ENCODE measurements at regions of chr1 and their contacts with region 1.

Region 1: DNA sequence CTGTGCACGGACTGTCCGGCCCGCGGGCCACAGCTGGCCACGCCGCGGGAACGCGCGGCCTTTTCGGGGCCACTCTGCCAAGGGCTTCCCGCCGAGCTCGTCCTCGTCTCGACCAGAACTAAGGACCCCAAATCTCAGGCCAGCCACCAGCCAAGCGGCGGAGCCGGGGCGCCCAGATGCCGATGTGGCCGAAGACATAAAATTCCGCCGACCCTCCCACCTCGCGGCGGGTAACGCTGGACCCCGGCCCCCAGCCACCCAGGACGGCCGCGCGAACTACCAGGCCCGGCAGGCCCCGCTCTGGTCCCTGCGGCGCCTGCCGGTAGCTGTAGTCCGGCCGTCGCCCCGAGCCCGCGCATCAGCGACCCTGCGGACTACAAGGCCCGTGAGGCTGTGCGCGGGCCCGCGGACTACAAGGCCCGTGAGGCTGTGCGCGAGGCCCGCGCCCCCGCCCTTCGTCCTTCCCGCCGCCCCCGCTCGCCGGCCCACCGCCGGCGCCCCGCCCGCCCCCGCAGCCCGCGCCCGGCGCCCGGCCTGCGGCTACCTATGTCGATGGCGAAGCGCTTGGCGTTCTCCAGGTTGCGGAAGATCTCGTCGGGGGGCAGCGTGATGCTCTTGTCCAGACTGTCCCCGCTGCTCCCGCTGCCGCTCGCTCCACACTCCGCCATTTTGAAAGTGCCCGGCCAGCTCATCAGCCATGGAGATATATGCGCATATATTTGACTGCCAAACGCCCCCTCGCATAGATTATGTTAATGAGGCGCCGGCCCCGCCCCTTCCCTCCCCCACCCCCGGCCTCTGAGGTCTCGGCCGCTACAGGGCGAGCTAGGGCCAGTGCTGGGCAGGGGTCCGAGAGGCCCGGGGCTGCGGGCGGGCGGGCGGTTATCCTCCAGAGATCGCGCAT is at the start of gene PANK4:
- DNase-seq: peak; percentile 80 to 90 (median 89)
- ATAC-seq: peak; percentile 95
- H3K4me3 ChIP-seq: peak within 1 kb of the TSS; percentile 65
- H3K4me3 Mint-ChIP-seq: peak within 1 kb of the TSS; percentile 88 to 100 (median 94)
- H3K27ac ChIP-seq: peak within 1 kb of the TSS; percentile 81
- H3K27ac Mint-ChIP-seq: peak within 1 kb of the TSS; percentile 87 to 98 (median 96)
- H3K4me1 ChIP-seq: peaks cover 44 to 47% of the 10 kb centered on the region in 2 donors
- H3K4me1 Mint-ChIP-seq: peaks cover 32 to 57% (median 44%) of the 10 kb centered on the region in 7 donors
- H3K27me3 ChIP-seq: peaks cover 4 to 7% of the 10 kb centered on the region in 2 donors
- H3K27me3 Mint-ChIP-seq: peaks cover 0 to 27% (median 0%) of the 10 kb centered on the region in 5 donors
- total RNA-seq, gene PANK4: 55.8 to 91.2 (median 72.6) TPM

Region 2: GRCh38 chr1:2133039-2133878 is 392.9 kb before region 1 on chr1:
- CTCF ChIA-PET with region 1: no interaction called
- POLR2A ChIA-PET with region 1: interaction called, 3 read pairs
- intact Hi-C with region 1: loop called in 1 of 2 experiments (anchors 1 kb)
- DNase-seq: peak; percentile 93 to 97 (median 96)
- ATAC-seq: peak; percentile 94
- H3K4me3 ChIP-seq: peak overlapping the region; percentile 66
- H3K4me3 Mint-ChIP-seq: peak overlapping the region; percentile 73 to 88 (median 83)
- H3K27ac ChIP-seq: peak overlapping the region; percentile 80
- H3K27ac Mint-ChIP-seq: peak overlapping the region; percentile 54 to 96 (median 93)
- H3K4me1 ChIP-seq: peaks cover 10% of the 10 kb centered on the region in 2 donors
- H3K4me1 Mint-ChIP-seq: peaks cover 5 to 32% (median 17%) of the 10 kb centered on the region in 7 donors
- H3K27me3 ChIP-seq: no peaks in the 10 kb centered on the region
- H3K27me3 Mint-ChIP-seq: no peaks in the 10 kb centered on the region

Region 3: GRCh38 chr1:2391041-2391930 is 134.9 kb before region 1 on chr1 and contains the starts of genes MORN1 and RER1:
- CTCF ChIA-PET with region 1: interaction called, 3 read pairs
- POLR2A ChIA-PET with region 1: interaction called, 4 read pairs
- intact Hi-C with region 1: loop called (anchors 1 kb)
- DNase-seq: peak; percentile 96 to 100 (median 99)
- ATAC-seq: peak; percentile 98
- H3K4me3 ChIP-seq: peak within 1 kb of the TSS; percentile 77
- H3K4me3 Mint-ChIP-seq: peak within 1 kb of the TSS; percentile 80 to 93 (median 90)
- H3K27ac ChIP-seq: peak within 1 kb of the TSS; percentile 82
- H3K27ac Mint-ChIP-seq: peak within 1 kb of the TSS; percentile 63 to 96 (median 88)
- H3K4me1 ChIP-seq: peaks cover 23 to 33% of the 10 kb centered on the region in 2 donors
- H3K4me1 Mint-ChIP-seq: peaks cover 23 to 41% (median 31%) of the 10 kb centered on the region in 7 donors
- H3K27me3 ChIP-seq: no peaks in the 10 kb centered on the region
- H3K27me3 Mint-ChIP-seq: no peaks in the 10 kb centered on the region
- total RNA-seq, gene MORN1: 8.5 to 16.4 (median 11.2) TPM
- total RNA-seq, gene RER1: 71.0 to 150 (median 136) TPM

Region 4: GRCh38 chr1:2425892-2426291 is 100.3 kb before region 1 on chr1:
- CTCF ChIA-PET with region 1: no interaction called
- POLR2A ChIA-PET with region 1: no interaction called
- intact Hi-C with region 1: no loop called
- DNase-seq: no peak
- ATAC-seq: no peak
- H3K4me3 ChIP-seq: no peak overlapping the region
- H3K4me3 Mint-ChIP-seq: no peak overlapping the region
- H3K27ac ChIP-seq: no peak overlapping the region
- H3K27ac Mint-ChIP-seq: no peak overlapping the region
- H3K4me1 ChIP-seq: no peaks in the 10 kb centered on the region
- H3K4me1 Mint-ChIP-seq: peaks cover 0 to 3% (median 0%) of the 10 kb centered on the region in 7 donors
- H3K27me3 ChIP-seq: no peaks in the 10 kb centered on the region
- H3K27me3 Mint-ChIP-seq: no peaks in the 10 kb centered on the region

Region 5: GRCh38 chr1:2556277-2556677 is 30.1 kb after region 1 on chr1 and contains the start of gene TNFRSF14:
- CTCF ChIA-PET with region 1: interaction called, 4 read pairs
- POLR2A ChIA-PET with region 1: interaction called, 16 read pairs
- intact Hi-C with region 1: no loop called
- DNase-seq: peak; percentile 47 to 82 (median 75)
- ATAC-seq: peak; percentile 76
- H3K4me3 ChIP-seq: peak within 1 kb of the TSS; percentile 83
- H3K4me3 Mint-ChIP-seq: peak within 1 kb of the TSS; percentile 89 to 100 (median 99)
- H3K27ac ChIP-seq: peak within 1 kb of the TSS; percentile 93
- H3K27ac Mint-ChIP-seq: peak within 1 kb of the TSS; percentile 89 to 99 (median 99)
- H3K4me1 ChIP-seq: peaks cover 25 to 28% of the 10 kb centered on the region in 2 donors
- H3K4me1 Mint-ChIP-seq: peaks cover 12 to 42% (median 36%) of the 10 kb centered on the region in 7 donors
- H3K27me3 ChIP-seq: no peaks in the 10 kb centered on the region
- H3K27me3 Mint-ChIP-seq: no peaks in the 10 kb centered on the region
- total RNA-seq, gene TNFRSF14: 182 to 253 (median 204) TPM

Region 6: DNA sequence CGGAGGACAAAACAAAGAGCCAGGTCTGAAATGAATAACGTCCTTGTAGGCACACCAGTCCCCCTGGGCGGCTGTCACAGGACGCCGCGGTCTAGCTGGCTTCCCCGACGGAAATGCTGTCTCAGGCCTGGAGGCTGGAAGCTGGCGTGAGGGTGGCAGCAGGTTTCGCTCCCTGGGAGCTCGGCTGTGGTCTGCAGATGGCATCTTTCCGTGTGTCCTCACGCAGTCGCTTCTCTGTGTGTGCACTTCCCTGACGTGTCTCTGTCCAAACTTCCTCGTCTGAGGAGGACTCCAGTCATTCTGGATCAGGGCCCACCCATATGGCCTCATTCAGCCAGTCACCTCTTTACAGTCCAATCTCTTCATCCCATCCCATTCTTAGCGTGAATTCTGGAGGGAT is 44.2 kb after region 1 on chr1:
- CTCF ChIA-PET with region 1: no interaction called
- POLR2A ChIA-PET with region 1: no interaction called
- intact Hi-C with region 1: no loop called
- DNase-seq: no peak
- ATAC-seq: peak; percentile 18
- H3K4me3 ChIP-seq: no peak overlapping the region
- H3K4me3 Mint-ChIP-seq: no peak overlapping the region
- H3K27ac ChIP-seq: no peak overlapping the region
- H3K27ac Mint-ChIP-seq: peak overlapping the region in 1 of 9 donors; percentile 26
- H3K4me1 ChIP-seq: no peaks in the 10 kb centered on the region
- H3K4me1 Mint-ChIP-seq: peaks cover 0 to 19% (median 9%) of the 10 kb centered on the region in 7 donors
- H3K27me3 ChIP-seq: no peaks in the 10 kb centered on the region
- H3K27me3 Mint-ChIP-seq: no peaks in the 10 kb centered on the region

Region 7: GRCh38 chr1:2642560-2643413 is 116.6 kb after region 1 on chr1:
- CTCF ChIA-PET with region 1: no interaction called
- POLR2A ChIA-PET with region 1: no interaction called
- intact Hi-C with region 1: loop called in 1 of 2 experiments (anchors 1 kb)
- DNase-seq: peak; percentile 92 to 97 (median 96)
- ATAC-seq: peak; percentile 89
- H3K4me3 ChIP-seq: peak overlapping the region; percentile 87
- H3K4me3 Mint-ChIP-seq: peak overlapping the region; percentile 85 to 96 (median 88)
- H3K27ac ChIP-seq: peak overlapping the region; percentile 97
- H3K27ac Mint-ChIP-seq: peak overlapping the region in 8 of 9 donors; percentile 76 to 93 (median 86)
- H3K4me1 ChIP-seq: peaks cover 9% of the 10 kb centered on the region in 2 donors
- H3K4me1 Mint-ChIP-seq: peaks cover 6 to 19% (median 15%) of the 10 kb centered on the region in 7 donors
- H3K27me3 ChIP-seq: no peaks in the 10 kb centered on the region
- H3K27me3 Mint-ChIP-seq: peaks cover 0 to 3% (median 0%) of the 10 kb centered on the region in 5 donors

Region 8: GRCh38 chr1:2946291-2946690 is 420.1 kb after region 1 on chr1:
- CTCF ChIA-PET with region 1: no interaction called
- POLR2A ChIA-PET with region 1: no interaction called
- intact Hi-C with region 1: no loop called
- DNase-seq: no peak
- ATAC-seq: no peak
- H3K4me3 ChIP-seq: no peak overlapping the region
- H3K4me3 Mint-ChIP-seq: no peak overlapping the region
- H3K27ac ChIP-seq: no peak overlapping the region
- H3K27ac Mint-ChIP-seq: no peak overlapping the region
- H3K4me1 ChIP-seq: no peaks in the 10 kb centered on the region
- H3K4me1 Mint-ChIP-seq: no peaks in the 10 kb centered on the region
- H3K27me3 ChIP-seq: no peaks in the 10 kb centered on the region
- H3K27me3 Mint-ChIP-seq: peaks cover 0 to 25% (median 9%) of the 10 kb centered on the region in 5 donors

Region 9: DNA sequence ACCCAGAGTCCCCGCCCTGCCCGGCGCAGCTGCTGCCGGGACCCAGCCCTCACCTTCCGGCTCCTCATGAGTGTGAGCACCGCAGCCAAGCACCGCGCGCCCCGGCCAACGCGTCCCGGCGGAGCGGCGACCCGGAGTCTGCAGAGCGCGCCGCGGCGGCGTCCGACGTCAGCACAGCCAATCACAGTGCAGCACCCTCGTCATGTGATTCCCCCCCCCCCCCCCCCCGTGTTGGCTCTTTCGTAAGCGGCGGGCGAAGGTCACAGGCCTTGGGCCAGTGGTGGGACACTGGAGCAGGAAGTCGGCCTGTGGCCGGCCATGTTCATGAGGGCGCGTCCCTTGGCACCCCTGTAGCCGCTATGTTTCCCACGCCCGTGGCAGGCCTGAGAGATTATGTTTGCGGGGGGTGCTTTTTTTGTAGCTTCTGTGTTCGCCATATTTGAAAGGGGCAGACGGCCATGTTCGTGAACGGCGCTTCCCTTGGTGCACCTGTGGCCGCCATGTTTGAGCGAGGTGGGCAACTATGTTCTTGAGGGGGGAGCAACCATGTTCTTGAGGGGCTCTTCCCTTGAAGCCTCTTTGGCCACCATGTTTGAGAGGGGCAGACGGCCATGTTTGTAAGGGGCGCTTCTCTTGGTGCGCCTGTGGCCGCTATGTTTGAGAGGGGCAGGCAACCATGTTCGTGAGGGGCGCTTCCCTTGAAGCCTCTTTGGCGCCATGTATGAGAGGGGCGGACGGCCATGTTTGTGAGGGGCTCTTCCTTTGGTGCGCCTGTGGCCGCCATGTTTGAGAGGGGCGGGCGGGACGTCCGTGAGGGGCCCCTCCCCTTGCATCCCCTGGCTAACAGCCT is 1374.2 kb after region 1 on chr1 and contains the start of gene C1orf174:
- CTCF ChIA-PET with region 1: no interaction called
- POLR2A ChIA-PET with region 1: no interaction called
- intact Hi-C with region 1: loop called in 1 of 2 experiments (anchors 2 kb)
- DNase-seq: peak; percentile 78 to 99 (median 96)
- ATAC-seq: peak; percentile 88
- H3K4me3 ChIP-seq: peak within 1 kb of the TSS; percentile 79
- H3K4me3 Mint-ChIP-seq: peak within 1 kb of the TSS; percentile 90 to 96 (median 94)
- H3K27ac ChIP-seq: peak within 1 kb of the TSS; percentile 94
- H3K27ac Mint-ChIP-seq: peak within 1 kb of the TSS; percentile 92 to 99 (median 96)
- H3K4me1 ChIP-seq: peaks cover 6 to 39% of the 10 kb centered on the region in 2 donors
- H3K4me1 Mint-ChIP-seq: peaks cover 23 to 71% (median 53%) of the 10 kb centered on the region in 7 donors
- H3K27me3 ChIP-seq: no peaks in the 10 kb centered on the region
- H3K27me3 Mint-ChIP-seq: no peaks in the 10 kb centered on the region
- total RNA-seq, gene C1orf174: 17.0 to 33.6 (median 27.1) TPM